Activated T-helper 1 cell treated with anti-CD3 and anti-CD28 coated beads, Interleukin-12 subunit alpha, Interleukin-12 subunit beta, Interleukin-2, Interleukin-4 antibody, amounts not matched to agents 30 ng/mL and 10 ng/mL and 1 ng/mL, durations not matched to agents 14 hours and 24 hours and 36 hours (primary cell): ENCODE measurements at regions of chr16 and their contacts with region 1.

Region 1: GRCh38 chr16:86563489-86564345 is 2.9 kb upstream of the FOXC2 start:
- DNase-seq: peak; percentile 81
- H3K4me3 Mint-ChIP-seq: peak overlapping the region; percentile 22
- H3K27ac Mint-ChIP-seq: peak overlapping the region; percentile 63
- H3K4me1 Mint-ChIP-seq: peaks cover 9% of the 10 kb centered on the region
- H3K27me3 Mint-ChIP-seq: peaks cover 45% of the 10 kb centered on the region

Region 2: DNA sequence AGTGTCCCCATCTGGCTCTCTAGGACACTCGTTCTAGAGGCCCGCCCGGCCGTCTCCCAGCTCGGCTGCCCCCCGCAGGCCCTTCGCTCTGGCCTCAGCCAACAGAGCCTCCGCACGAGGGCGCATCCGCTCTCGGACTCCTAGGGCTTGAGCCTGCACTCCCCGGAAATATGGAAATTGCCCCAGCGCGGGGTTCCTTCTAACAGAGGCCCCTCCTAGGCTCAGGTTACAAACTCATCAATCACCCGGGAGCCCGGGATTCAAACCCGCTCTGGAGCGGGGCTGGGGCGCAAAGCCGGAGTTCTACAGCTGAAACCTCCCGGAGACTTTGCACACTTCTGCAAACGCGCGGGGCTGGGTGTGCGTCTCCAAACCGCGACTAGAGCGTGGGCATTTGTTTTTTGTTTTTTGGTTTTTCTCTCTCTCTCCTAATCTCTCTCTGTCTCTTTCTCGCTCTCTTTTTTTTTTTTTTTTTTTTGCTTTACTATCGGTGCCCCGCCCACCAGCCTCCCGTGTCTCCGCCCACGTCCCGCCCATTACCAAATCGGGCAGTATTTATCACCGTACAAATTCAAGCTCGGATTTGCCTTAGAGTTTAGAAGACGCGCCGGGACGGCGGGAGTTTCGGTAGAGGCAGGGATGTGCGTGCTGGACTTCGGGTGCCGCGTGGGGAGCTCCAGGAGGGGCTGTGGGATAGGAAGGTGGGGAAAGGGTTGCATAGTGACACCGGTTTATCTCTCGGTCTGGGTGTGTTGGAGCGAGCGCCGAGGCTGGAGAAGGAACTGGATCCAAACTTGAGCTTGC is 12.2 kb after region 1 on chr16:
- intact Hi-C with region 1: loop called (anchors 1 kb)
- DNase-seq: peak; percentile 32
- H3K4me3 Mint-ChIP-seq: peak overlapping the region; percentile 75
- H3K27ac Mint-ChIP-seq: no peak overlapping the region
- H3K4me1 Mint-ChIP-seq: peaks cover 5% of the 10 kb centered on the region
- H3K27me3 Mint-ChIP-seq: peaks cover 62% of the 10 kb centered on the region

Region 3: DNA sequence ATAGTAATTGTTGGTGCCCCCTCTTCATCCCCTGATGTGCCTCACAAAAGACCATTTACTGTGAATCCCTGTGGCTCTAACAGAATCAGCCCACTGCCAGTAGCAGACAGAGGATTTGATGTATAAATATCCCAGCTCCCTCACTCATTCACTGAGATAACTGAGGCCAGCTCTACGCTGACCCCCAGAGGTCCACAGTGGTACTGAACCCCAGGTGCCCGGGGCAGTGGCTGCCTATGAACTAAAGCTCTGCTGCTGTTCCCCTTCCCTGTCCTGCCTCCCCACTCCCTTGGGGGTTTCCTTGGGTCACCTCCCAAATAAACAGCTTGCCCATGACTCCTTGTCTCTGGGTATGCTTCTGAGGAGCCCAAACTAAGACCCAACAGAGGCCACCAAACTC is 310.4 kb after region 1 on chr16:
- intact Hi-C with region 1: loop called (anchors 1 kb)
- DNase-seq: peak; percentile 8
- H3K4me3 Mint-ChIP-seq: no peak overlapping the region
- H3K27ac Mint-ChIP-seq: no peak overlapping the region
- H3K4me1 Mint-ChIP-seq: no peaks in the 10 kb centered on the region
- H3K27me3 Mint-ChIP-seq: peaks cover 22% of the 10 kb centered on the region

Region 4: GRCh38 chr16:87076950-87077749 is 513.4 kb after region 1 on chr16:
- intact Hi-C with region 1: loop called (anchors 1 kb)
- DNase-seq: peak; percentile 18
- H3K4me3 Mint-ChIP-seq: no peak overlapping the region
- H3K27ac Mint-ChIP-seq: no peak overlapping the region
- H3K4me1 Mint-ChIP-seq: no peaks in the 10 kb centered on the region
- H3K27me3 Mint-ChIP-seq: no peaks in the 10 kb centered on the region

Region 5: DNA sequence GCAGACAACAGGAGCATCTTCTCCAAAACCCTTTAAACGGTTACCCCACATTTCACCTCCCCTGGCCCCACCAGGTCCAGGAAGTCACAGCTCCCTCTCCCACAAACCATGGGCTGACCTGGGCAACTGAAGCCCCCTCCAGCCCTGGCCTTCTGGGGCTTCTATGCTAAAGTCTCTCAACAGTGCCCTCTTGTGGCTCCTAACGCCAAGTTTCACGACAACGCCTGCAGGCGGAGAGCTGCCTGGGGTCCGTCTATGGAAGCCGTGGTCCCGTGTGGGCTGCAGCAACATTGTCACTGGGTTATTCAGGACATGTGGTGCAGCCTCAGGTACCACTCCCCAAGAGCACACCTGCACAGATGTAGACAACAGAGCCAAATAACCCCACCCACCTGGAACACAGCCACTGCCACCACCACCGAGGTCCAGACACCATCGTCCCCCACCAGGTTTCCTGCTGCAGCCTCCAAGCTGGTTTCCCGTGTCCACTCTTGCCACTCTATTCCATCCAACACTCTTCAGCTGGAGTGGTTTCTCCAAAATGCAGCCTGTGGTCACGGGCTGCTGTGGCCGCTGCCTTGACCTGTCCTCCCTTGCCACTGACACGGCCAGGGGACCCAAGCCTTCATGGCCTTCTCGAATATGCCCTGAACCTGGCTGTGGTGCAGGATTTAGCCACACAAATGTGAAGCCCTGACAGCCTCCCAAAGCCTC is 734.4 kb after region 1 on chr16:
- intact Hi-C with region 1: loop called (anchors 1 kb)
- DNase-seq: no peak
- H3K4me3 Mint-ChIP-seq: no peak overlapping the region
- H3K27ac Mint-ChIP-seq: no peak overlapping the region
- H3K4me1 Mint-ChIP-seq: peaks cover 15% of the 10 kb centered on the region
- H3K27me3 Mint-ChIP-seq: no peaks in the 10 kb centered on the region

Region 6: DNA sequence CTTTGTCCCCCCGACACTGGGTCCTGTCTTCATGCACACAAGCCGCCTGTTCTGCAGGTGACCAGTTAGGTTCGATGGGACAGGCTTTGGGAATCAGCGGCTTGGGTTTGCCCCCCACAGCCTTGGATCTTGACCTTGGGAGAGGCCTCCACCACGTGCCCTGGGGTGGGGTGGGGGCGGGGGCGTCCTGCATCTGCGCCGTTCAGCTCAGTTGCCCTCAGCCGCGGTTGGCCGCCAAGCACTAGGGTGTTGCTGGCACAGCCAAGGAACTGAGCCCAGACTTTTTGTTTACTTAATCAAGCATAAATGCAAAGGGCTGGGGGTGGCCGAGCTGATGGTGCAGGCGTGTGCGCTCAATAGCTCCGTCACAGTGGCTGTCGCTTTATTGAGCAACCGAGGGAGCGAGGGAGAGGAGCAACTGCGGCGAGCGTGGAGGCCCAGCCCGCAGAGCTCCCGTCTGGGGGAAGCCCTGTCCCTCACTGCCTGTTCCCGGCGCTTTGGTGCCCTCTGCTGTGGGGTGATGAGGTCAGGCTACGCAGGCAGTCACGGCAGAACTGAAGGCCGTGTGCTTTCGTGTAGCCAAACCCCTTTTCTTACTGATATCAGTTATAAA is 1072.5 kb after region 1 on chr16:
- intact Hi-C with region 1: loop called (anchors 5 kb)
- DNase-seq: peak; percentile 52
- H3K4me3 Mint-ChIP-seq: peak overlapping the region; percentile 45
- H3K27ac Mint-ChIP-seq: no peak overlapping the region
- H3K4me1 Mint-ChIP-seq: no peaks in the 10 kb centered on the region
- H3K27me3 Mint-ChIP-seq: peaks cover 11% of the 10 kb centered on the region